Panc1 (cell line): ENCODE measurements at regions of chr12 and their contacts with region 1.

Region 1: DNA sequence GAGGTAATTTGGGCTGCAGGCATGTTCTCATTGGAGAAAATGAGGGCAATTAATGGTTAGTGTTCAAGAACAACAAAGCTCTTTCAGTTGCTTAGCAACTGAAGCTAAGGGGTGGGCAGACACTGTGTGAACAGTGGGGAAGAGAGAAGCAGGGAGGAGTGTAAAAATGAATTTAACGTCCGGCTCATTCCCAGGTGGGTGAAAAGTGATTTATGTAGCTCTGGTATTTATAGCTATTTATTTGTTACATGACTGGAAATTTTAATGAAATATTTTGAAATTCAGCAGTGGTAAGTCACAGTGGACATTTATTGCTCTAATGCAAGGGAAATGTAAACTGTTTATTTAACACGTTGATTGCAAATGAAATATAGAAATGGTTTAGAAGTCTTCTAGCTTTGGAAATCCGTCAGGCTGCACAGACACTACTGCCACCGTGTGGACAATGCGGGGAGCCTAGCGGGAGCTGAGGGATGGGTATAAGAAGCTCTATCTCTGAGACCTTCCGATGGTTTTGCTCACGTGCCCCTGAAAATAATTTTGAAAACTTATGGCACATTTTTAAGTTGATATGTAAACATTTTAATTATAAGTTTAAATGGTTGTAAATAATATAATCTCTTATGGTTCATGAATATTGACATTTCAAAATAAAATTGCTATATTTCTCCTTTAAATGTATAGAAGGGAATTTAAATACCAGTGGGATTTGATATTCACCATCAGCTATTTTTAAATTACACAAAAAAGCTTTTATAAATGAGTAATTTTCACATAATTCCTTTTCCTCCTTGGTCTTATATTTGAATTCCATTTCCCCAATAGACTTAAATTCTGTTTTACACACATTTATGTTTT is 54.4 kb downstream of the E2F7 start:
- DNase-seq: peak; percentile 52
- ATAC-seq: peak; percentile 94
- H3K4me3 ChIP-seq: no peak overlapping the region
- H3K27ac ChIP-seq: no peak overlapping the region
- H3K4me1 ChIP-seq: 0 out of 2 replicates have a peak, but pooled peaks cover 4% of the 10 kb centered on the region
- H3K27me3 ChIP-seq: peaks cover 3% of the 10 kb centered on the region; the same call in 1 of the 2 replicates
- CTCF ChIP-seq: peak; percentile 98

Region 2: GRCh38 chr12:76455582-76456345 is 555.2 kb before region 1 on chr12:
- CTCF ChIA-PET with region 1: no interaction called
- POLR2A ChIA-PET with region 1: no interaction called
- in situ Hi-C with region 1: no loop called
- intact Hi-C with region 1: no loop called
- DNase-seq: peak; percentile 84
- ATAC-seq: peak; percentile 99
- H3K4me3 ChIP-seq: no peak overlapping the region
- H3K27ac ChIP-seq: peak overlapping the region; percentile 55
- H3K4me1 ChIP-seq: peaks cover 8% of the 10 kb centered on the region
- H3K27me3 ChIP-seq: no peaks in the 10 kb centered on the region
- CTCF ChIP-seq: peak; percentile 72; the same call in 1 of the 2 replicates

Region 3: DNA sequence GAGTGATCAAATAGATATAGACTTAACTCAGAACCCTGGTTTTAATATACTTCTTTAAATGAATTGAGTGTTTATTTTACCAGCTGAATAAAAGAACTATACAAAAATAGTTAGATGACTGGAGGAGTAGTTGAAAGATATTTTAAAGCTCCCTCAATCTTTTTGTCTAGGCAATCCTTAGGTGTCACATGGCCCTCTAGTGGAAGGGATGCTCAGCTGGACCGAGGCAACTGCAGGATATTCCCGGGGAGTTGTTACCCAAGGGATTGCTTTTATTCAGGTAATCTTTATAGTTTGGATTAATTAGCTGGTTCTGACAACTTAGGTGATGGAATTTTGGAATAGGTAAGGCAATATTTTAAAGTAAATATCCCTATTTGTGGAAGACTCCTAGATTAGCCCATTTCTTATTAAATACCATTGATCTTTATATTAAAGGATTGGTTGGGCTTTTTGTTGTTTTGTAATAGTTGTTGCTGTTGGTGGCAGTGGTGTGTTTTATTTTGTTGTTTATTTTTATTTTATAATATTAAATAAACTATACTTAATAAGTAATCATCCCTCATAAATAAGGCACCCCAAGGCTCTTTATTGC is 189.9 kb before region 1 on chr12:
- CTCF ChIA-PET with region 1: no interaction called
- POLR2A ChIA-PET with region 1: no interaction called
- in situ Hi-C with region 1: no loop called
- intact Hi-C with region 1: loop called (anchors 10 kb)
- DNase-seq: no peak
- ATAC-seq: peak; percentile 73
- H3K4me3 ChIP-seq: no peak overlapping the region
- H3K27ac ChIP-seq: no peak overlapping the region
- H3K4me1 ChIP-seq: no peaks in the 10 kb centered on the region
- H3K27me3 ChIP-seq: no peaks in the 10 kb centered on the region
- CTCF ChIP-seq: peak; percentile 82